CD8-positive, alpha-beta T cell (primary cell): ENCODE measurements at regions of chr6 and their contacts with region 1.

Region 1: GRCh38 chr6:32868257-32868788 is 14.3 kb downstream of the PSMB9 start:
- DNase-seq: peak; percentile 72 to 93 (median 89)
- ATAC-seq: peak; percentile 80
- H3K4me3 ChIP-seq: no peak overlapping the region
- H3K4me3 Mint-ChIP-seq: no peak overlapping the region
- H3K27ac ChIP-seq: no peak overlapping the region
- H3K27ac Mint-ChIP-seq: no peak overlapping the region
- H3K4me1 ChIP-seq: peaks cover 29% of the 10 kb centered on the region
- H3K4me1 Mint-ChIP-seq: peaks cover 28% of the 10 kb centered on the region
- H3K27me3 ChIP-seq: no peaks in the 10 kb centered on the region
- H3K27me3 Mint-ChIP-seq: no peaks in the 10 kb centered on the region
- CTCF ChIP-seq: peak; percentile 96

Region 2: DNA sequence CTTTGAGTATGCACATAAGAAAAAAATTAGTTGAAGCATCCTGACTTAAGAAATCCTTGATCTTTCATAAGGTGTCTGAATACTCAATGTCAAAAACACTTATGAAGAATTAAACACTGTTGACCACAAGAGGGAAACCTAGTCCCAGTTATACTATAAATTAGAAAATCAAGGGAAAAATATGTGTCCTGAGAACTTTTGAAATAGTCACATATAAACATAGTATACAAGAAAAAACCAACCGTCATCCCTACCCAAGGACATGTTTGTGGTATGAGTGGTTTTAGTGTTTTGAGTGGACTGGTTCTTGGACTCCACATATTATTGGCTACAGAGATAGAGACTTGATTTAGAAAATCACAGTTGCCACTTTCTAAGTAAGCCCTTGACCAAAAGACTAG is 436.3 kb before region 1 on chr6:
- CTCF ChIA-PET with region 1: interaction called, 5 read pairs
- POLR2A ChIA-PET with region 1: no interaction called
- intact Hi-C with region 1: loop called in 1 of 2 experiments (anchors 5 kb)
- DNase-seq: peak in 2 of 9 experiments; percentile 52 to 65
- ATAC-seq: peak; percentile 36
- H3K4me3 ChIP-seq: no peak overlapping the region
- H3K4me3 Mint-ChIP-seq: no peak overlapping the region
- H3K27ac ChIP-seq: no peak overlapping the region
- H3K27ac Mint-ChIP-seq: no peak overlapping the region
- H3K4me1 ChIP-seq: no peaks in the 10 kb centered on the region
- H3K4me1 Mint-ChIP-seq: no peaks in the 10 kb centered on the region
- H3K27me3 ChIP-seq: no peaks in the 10 kb centered on the region
- H3K27me3 Mint-ChIP-seq: peaks cover 13% of the 10 kb centered on the region
- CTCF ChIP-seq: peak; percentile 63

Region 3: DNA sequence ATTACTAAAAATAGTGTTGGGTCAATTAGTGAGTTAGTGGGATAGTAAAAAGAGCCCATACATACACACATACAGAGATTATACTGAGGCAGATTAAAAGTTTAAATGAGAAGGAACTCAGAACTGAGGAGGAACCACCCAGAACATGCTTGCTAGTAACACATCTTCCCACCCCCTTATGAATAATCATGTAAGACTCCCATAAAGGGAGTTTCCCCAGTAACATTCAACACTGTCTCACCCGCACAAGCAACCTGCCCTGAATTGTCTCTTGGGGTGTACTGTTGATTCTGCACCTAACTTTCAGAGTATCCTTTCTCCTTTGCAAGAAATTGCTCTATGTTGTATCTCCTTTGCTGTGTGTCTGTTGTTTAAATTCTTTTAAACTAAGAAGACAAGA is 93.9 kb before region 1 on chr6:
- CTCF ChIA-PET with region 1: no interaction called
- POLR2A ChIA-PET with region 1: no interaction called
- intact Hi-C with region 1: no loop called
- DNase-seq: no peak
- ATAC-seq: no peak
- H3K4me3 ChIP-seq: no peak overlapping the region
- H3K4me3 Mint-ChIP-seq: no peak overlapping the region
- H3K27ac ChIP-seq: no peak overlapping the region
- H3K27ac Mint-ChIP-seq: no peak overlapping the region
- H3K4me1 ChIP-seq: no peaks in the 10 kb centered on the region
- H3K4me1 Mint-ChIP-seq: no peaks in the 10 kb centered on the region
- H3K27me3 ChIP-seq: no peaks in the 10 kb centered on the region
- H3K27me3 Mint-ChIP-seq: peaks cover 25% of the 10 kb centered on the region
- CTCF ChIP-seq: no peak

Region 4: DNA sequence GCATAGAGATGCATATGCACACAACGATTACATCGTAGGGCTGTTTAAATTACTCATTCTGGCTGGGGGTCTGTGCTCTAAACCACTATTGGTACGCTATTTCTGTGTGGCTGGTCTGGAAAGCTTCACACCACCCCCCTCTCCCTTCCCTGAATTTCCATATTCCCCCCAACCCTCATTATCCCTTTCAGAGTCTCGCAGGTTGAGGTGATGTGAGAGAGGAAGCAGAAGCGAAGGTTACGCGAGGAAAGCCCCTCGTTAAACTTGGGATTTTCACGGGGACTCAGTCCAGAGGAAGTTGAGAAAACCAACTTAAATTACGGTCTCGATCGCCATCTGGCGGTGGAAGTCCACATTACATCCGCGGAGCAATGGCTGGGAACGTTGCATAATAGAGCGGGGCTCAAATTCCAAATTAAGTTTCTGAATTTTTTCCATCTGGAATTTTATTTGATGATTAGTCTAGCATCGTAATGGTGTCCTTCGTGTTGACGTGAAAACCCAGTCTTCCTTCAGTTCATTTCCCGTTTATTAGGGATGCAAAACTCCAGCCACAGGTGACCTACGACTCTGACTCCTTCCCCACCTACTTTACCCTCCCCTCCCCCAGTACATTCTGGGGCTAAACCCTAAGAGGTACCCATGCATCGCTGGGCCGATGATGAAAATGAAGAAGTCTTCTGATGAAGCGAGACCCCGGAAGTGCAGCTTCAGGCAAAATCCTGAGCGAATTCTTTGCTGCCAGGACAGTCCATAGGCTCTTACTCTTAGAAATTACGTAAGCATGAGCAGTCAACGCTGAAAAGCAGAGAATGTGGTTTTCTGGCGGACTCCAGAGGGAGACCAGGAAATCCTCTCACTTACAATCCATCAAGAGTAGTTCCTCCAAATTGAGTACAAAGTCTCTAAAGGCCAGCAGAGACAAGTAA is 71.2 kb before region 1 on chr6:
- CTCF ChIA-PET with region 1: interaction called, 12 read pairs
- POLR2A ChIA-PET with region 1: interaction called, 3 read pairs
- intact Hi-C with region 1: loop called (anchors 1 to 2 kb)
- DNase-seq: peak; percentile 60 to 88 (median 81)
- ATAC-seq: peak; percentile 79
- H3K4me3 ChIP-seq: peak overlapping the region in 1 of 2 experiments; percentile 33
- H3K4me3 Mint-ChIP-seq: peak overlapping the region; percentile 64
- H3K27ac ChIP-seq: no peak overlapping the region
- H3K27ac Mint-ChIP-seq: no peak overlapping the region
- H3K4me1 ChIP-seq: peaks cover 17% of the 10 kb centered on the region
- H3K4me1 Mint-ChIP-seq: peaks cover 27% of the 10 kb centered on the region
- H3K27me3 ChIP-seq: peaks cover 0 to 6% of the 10 kb centered on the region in 2 experiments
- H3K27me3 Mint-ChIP-seq: peaks cover 36% of the 10 kb centered on the region
- CTCF ChIP-seq: peak; percentile 97

Region 5: GRCh38 chr6:32843979-32844838 is 24.1 kb before region 1 on chr6 and contains the start of gene PSMB8:
- CTCF ChIA-PET with region 1: interaction called, 320 read pairs
- POLR2A ChIA-PET with region 1: interaction called, 84 read pairs
- intact Hi-C with region 1: no loop called
- DNase-seq: peak; percentile 96 to 99 (median 99)
- ATAC-seq: peak; percentile 75
- H3K4me3 ChIP-seq: peak within 1 kb of the TSS; percentile 99
- H3K4me3 Mint-ChIP-seq: peak within 1 kb of the TSS; percentile 99
- H3K27ac ChIP-seq: peak within 1 kb of the TSS; percentile 96 to 100
- H3K27ac Mint-ChIP-seq: peak within 1 kb of the TSS; percentile 99
- H3K4me1 ChIP-seq: peaks cover 79% of the 10 kb centered on the region
- H3K4me1 Mint-ChIP-seq: peaks cover 83% of the 10 kb centered on the region
- H3K27me3 ChIP-seq: no peaks in the 10 kb centered on the region
- H3K27me3 Mint-ChIP-seq: no peaks in the 10 kb centered on the region
- CTCF ChIP-seq: no peak
- total RNA-seq, gene PSMB8: 108 to 117 TPM

Region 6: GRCh38 chr6:32894080-32895005 is 26.0 kb after region 1 on chr6:
- CTCF ChIA-PET with region 1: interaction called, 11 read pairs
- POLR2A ChIA-PET with region 1: no interaction called
- intact Hi-C with region 1: no loop called
- DNase-seq: peak; percentile 88 to 98 (median 95)
- ATAC-seq: peak; percentile 96
- H3K4me3 ChIP-seq: peak overlapping the region; percentile 89 to 92
- H3K4me3 Mint-ChIP-seq: peak overlapping the region; percentile 99
- H3K27ac ChIP-seq: peak overlapping the region; percentile 62 to 89
- H3K27ac Mint-ChIP-seq: peak overlapping the region; percentile 97
- H3K4me1 ChIP-seq: peaks cover 20% of the 10 kb centered on the region
- H3K4me1 Mint-ChIP-seq: peaks cover 46% of the 10 kb centered on the region
- H3K27me3 ChIP-seq: no peaks in the 10 kb centered on the region
- H3K27me3 Mint-ChIP-seq: no peaks in the 10 kb centered on the region
- CTCF ChIP-seq: no peak

Region 7: DNA sequence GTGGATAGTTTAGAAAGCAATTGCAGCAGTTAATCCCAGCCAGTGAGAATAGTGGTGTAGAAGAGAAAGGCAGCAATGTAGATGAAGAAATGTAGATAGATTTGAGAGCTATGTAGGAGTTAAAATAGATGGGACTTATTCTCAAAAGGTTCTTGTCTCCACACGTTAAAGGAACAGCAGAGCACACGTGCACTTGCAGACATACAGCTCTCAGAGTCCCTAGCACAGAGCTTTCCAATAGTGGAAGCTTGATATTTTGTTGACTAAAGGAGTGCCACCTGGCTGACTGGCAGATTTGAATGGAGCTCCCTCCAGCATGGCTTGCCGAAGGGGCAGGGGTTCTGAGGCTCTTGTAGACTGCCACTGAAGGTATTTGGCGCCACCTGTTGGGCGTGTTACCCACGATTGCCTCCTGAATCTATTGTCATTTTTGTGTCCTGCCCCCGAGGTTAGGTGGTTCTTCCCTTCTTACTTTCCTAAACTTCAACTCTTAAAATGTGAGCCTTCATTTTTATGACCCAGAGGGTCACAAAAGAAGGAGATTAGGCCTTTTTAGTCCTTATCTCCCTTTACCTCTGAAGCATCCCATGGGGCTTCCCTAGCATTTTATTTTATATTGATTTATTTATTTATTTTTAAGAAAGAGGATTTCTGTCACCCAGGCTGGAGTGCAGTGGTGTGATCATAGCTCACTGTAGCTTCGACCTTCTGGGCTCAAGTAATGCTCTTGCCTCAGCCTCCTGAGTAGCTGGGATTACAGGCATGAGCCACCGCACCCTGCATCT is 116.5 kb after region 1 on chr6:
- CTCF ChIA-PET with region 1: interaction called, 52 read pairs
- POLR2A ChIA-PET with region 1: interaction called, 3 read pairs
- intact Hi-C with region 1: no loop called
- DNase-seq: peak; percentile 82 to 94 (median 91)
- ATAC-seq: peak; percentile 96
- H3K4me3 ChIP-seq: no peak overlapping the region
- H3K4me3 Mint-ChIP-seq: no peak overlapping the region
- H3K27ac ChIP-seq: peak overlapping the region in 1 of 2 experiments; percentile 44
- H3K27ac Mint-ChIP-seq: no peak overlapping the region
- H3K4me1 ChIP-seq: peaks cover 5% of the 10 kb centered on the region
- H3K4me1 Mint-ChIP-seq: peaks cover 20% of the 10 kb centered on the region
- H3K27me3 ChIP-seq: no peaks in the 10 kb centered on the region
- H3K27me3 Mint-ChIP-seq: no peaks in the 10 kb centered on the region
- CTCF ChIP-seq: peak; percentile 87